PC-3 (cell line): ENCODE measurements at regions of chr2 and their contacts with region 1.

Region 1: DNA sequence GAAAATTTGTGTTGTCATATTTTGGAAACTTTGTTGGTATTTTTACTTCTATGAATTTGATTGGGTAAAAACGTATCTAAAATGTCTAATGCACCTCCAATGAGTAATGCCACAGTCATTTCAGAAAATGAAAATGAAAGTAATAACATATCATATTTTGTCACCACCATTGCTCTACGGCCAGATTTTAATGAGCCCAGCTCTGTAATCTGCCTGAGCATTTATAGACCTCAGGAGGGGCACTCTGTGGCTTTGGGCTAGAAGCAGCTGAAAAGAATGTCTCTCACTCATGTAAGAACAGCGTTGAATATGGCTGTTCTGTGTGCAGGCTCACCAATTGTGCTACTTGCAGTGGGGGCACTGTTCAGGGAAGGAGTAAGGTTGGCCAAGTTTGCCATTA is 32.7 kb upstream of the ABCA12 start:
- DNase-seq: peak; percentile 53
- ATAC-seq: peak; percentile 80
- H3K4me3 ChIP-seq: peak overlapping the region; percentile 45
- H3K27ac ChIP-seq: no peak overlapping the region
- H3K4me1 ChIP-seq: peaks cover 8% of the 10 kb centered on the region
- H3K27me3 ChIP-seq: no peaks in the 10 kb centered on the region
- CTCF ChIP-seq: no peak

Region 2: GRCh38 chr2:215080545-215080944 is 90.6 kb before region 1 on chr2:
- CTCF ChIA-PET with region 1: no interaction called
- POLR2A ChIA-PET with region 1: no interaction called
- intact Hi-C with region 1: loop called (anchors 5 kb)
- DNase-seq: no peak
- ATAC-seq: no peak
- H3K4me3 ChIP-seq: no peak overlapping the region
- H3K27ac ChIP-seq: no peak overlapping the region
- H3K4me1 ChIP-seq: no peaks in the 10 kb centered on the region
- H3K27me3 ChIP-seq: no peaks in the 10 kb centered on the region
- CTCF ChIP-seq: no peak

Region 3: GRCh38 chr2:215214408-215214807 is 43.3 kb after region 1 on chr2:
- CTCF ChIA-PET with region 1: no interaction called
- POLR2A ChIA-PET with region 1: no interaction called
- intact Hi-C with region 1: no loop called
- DNase-seq: no peak
- ATAC-seq: no peak
- H3K4me3 ChIP-seq: no peak overlapping the region
- H3K27ac ChIP-seq: no peak overlapping the region
- H3K4me1 ChIP-seq: no peaks in the 10 kb centered on the region
- H3K27me3 ChIP-seq: no peaks in the 10 kb centered on the region
- CTCF ChIP-seq: no peak

Region 4: GRCh38 chr2:215290980-215291599 is 119.9 kb after region 1 on chr2:
- CTCF ChIA-PET with region 1: no interaction called
- POLR2A ChIA-PET with region 1: no interaction called
- intact Hi-C with region 1: no loop called
- DNase-seq: no peak
- ATAC-seq: no peak
- H3K4me3 ChIP-seq: no peak overlapping the region
- H3K27ac ChIP-seq: no peak overlapping the region
- H3K4me1 ChIP-seq: no peaks in the 10 kb centered on the region
- H3K27me3 ChIP-seq: no peaks in the 10 kb centered on the region
- CTCF ChIP-seq: no peak